GM10248 (cell line): ENCODE measurements at regions of chr20 and their contacts with region 1.

Region 1: GRCh38 chr20:41218466-41218865 is 81.1 kb downstream of the PLCG1 start:
- DNase-seq: no peak
- CTCF ChIP-seq: no peak

Region 2: DNA sequence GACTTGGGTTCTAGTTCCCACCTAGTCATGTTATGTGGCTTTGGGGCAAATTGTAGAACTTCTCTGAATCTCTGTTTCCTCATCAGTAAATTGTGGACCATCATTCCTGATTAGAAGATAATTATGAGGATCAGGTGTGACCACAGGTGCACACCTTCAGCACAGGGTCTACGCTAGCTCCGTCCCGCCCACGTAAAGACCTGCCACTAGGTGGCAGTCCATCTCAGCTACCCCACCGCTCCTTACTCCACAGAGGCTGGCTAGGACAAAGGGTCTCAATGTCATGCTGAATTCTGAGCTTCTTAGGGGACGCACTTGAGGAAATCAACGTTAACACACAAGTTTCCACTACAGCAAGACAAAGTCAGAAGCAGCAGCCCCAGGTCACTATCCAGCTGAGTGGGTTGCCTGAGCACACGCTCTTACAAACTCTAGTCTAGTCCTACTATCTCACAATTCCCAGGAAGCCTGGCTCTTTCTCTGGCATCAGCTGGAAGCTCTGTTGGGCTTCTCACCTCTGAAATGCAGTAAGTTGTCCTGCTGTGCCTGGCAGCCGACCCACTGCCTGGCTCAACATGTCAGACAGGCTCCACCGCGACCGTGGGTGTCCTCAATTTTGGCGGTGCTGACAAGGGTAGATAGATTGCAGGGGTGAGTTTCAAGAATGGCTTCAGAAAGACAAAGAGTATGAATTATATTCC is 83.1 kb before region 1 on chr20:
- CTCF ChIA-PET with region 1: no interaction called
- POLR2A ChIA-PET with region 1: no interaction called
- DNase-seq: peak; percentile 66
- CTCF ChIP-seq: peak; percentile 77

Region 3: DNA sequence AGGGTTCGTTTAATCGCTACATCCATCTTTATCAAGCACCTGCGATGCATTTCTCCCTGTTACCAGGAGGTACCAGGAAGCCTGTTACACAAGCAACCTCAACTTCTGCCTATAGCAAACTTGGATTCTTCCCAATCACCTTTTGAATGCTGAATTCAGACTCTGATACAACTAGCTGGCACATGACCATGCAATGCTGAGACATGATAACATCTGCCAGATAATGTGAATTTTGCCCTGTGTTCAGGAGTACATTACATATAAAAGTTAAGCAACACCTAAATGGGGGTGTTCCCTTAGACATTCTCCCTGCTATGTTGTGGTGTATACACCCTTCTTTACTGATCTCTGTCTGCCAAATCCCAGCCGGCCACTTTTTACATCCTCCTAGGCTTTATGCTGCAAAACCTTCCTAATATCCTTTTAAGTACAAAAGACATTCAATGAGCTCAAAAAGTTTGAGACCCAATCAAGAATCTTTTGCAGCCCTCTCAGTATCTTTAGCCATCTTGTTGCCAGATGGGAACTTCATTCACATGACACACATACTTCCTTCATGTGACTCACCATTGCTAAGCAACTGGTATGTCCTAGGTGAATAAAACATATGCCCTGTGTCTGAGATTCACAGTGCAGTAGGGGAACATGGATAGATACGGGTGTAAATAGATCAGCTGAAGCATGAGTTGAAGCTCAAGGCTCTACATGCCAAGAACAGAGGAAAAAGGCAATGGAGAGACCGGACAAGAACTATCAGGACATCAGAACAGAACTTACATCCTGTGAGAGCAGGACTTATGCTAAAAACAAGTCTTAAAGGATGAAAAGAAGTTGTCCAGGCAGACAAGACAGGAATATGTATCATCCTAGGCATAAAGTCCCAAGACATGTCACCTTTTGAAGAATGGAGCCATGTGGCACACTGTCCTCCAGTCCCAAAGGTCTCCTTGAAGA is 14.8 kb after region 1 on chr20:
- CTCF ChIA-PET with region 1: interaction called, 24 read pairs
- POLR2A ChIA-PET with region 1: no interaction called
- DNase-seq: no peak
- CTCF ChIP-seq: no peak

Region 4: DNA sequence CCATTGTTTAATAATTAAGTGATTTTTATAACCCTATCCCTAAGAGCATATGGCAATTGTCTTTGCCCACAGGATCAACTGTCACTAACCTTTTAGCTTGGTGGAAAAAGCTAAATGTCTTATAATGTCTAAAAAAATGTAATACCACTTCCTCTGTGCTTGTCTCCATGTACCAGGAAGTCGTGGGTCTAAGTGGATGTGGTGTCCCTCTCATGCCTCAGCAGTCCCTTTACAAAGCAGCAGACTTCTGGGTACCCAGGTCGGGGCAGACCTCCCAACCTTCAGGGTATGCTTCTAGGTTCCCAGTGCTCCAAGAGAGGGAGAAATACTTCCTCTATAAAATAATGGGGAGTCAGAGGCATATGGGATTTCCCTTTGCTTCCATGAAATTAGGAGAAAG is 24.3 kb after region 1 on chr20:
- CTCF ChIA-PET with region 1: interaction called, 17 read pairs
- POLR2A ChIA-PET with region 1: no interaction called
- DNase-seq: no peak
- CTCF ChIP-seq: no peak